GM12878 (cell line): ENCODE measurements at regions of chr22 and their contacts with region 1.

Region 1: GRCh38 chr22:33049119-33049729 is 9.0 kb downstream of the SYN3 start:
- DNase-seq: peak; percentile 5
- ATAC-seq: peak; percentile 90
- H3K4me3 ChIP-seq: no peak overlapping the region
- H3K27ac ChIP-seq: no peak overlapping the region
- H3K4me1 ChIP-seq: no peaks in the 10 kb centered on the region
- H3K27me3 ChIP-seq: peaks cover 0 to 10% of the 10 kb centered on the region in 2 experiments; a peak in 2 of 4 replicates
- CTCF ChIP-seq: peak; percentile 81 to 94 (median 90)
- EP300 ChIP-seq: no peak
- POLR2A ChIP-seq: no peak
- RAD21 ChIP-seq: peak; percentile 57

Region 2: GRCh38 chr22:33035272-33035863 is 13.9 kb before region 1 on chr22:
- CTCF ChIA-PET with region 1: interaction called, 16 read pairs
- POLR2A ChIA-PET with region 1: no interaction called
- RAD21 ChIA-PET with region 1: no interaction called
- SMC1A ChIA-PET with region 1: interaction called, 3 read pairs
- in situ Hi-C with region 1: no loop called
- intact Hi-C with region 1: no loop called
- DNase-seq: no peak
- ATAC-seq: no peak
- H3K4me3 ChIP-seq: no peak overlapping the region
- H3K27ac ChIP-seq: no peak overlapping the region
- H3K4me1 ChIP-seq: no peaks in the 10 kb centered on the region
- H3K27me3 ChIP-seq: no peaks in the 10 kb centered on the region; a peak in 2 of 4 replicates
- CTCF ChIP-seq: no peak
- EP300 ChIP-seq: no peak
- POLR2A ChIP-seq: no peak
- RAD21 ChIP-seq: no peak

Region 3: GRCh38 chr22:33202455-33202854 is 153.2 kb after region 1 on chr22:
- CTCF ChIA-PET with region 1: interaction called, 14 read pairs
- POLR2A ChIA-PET with region 1: no interaction called
- RAD21 ChIA-PET with region 1: no interaction called
- SMC1A ChIA-PET with region 1: interaction called, 5 read pairs
- in situ Hi-C with region 1: no loop called
- intact Hi-C with region 1: no loop called
- DNase-seq: no peak
- ATAC-seq: no peak
- H3K4me3 ChIP-seq: no peak overlapping the region
- H3K27ac ChIP-seq: no peak overlapping the region
- H3K4me1 ChIP-seq: peaks cover 4% of the 10 kb centered on the region; the same call in 1 of the 2 replicates
- H3K27me3 ChIP-seq: no peaks in the 10 kb centered on the region
- CTCF ChIP-seq: no peak
- EP300 ChIP-seq: no peak
- POLR2A ChIP-seq: no peak
- RAD21 ChIP-seq: no peak